Aorta (tissue), 5 donors: ENCODE measurements at regions of chr6 and their contacts with region 1.

Region 1: DNA sequence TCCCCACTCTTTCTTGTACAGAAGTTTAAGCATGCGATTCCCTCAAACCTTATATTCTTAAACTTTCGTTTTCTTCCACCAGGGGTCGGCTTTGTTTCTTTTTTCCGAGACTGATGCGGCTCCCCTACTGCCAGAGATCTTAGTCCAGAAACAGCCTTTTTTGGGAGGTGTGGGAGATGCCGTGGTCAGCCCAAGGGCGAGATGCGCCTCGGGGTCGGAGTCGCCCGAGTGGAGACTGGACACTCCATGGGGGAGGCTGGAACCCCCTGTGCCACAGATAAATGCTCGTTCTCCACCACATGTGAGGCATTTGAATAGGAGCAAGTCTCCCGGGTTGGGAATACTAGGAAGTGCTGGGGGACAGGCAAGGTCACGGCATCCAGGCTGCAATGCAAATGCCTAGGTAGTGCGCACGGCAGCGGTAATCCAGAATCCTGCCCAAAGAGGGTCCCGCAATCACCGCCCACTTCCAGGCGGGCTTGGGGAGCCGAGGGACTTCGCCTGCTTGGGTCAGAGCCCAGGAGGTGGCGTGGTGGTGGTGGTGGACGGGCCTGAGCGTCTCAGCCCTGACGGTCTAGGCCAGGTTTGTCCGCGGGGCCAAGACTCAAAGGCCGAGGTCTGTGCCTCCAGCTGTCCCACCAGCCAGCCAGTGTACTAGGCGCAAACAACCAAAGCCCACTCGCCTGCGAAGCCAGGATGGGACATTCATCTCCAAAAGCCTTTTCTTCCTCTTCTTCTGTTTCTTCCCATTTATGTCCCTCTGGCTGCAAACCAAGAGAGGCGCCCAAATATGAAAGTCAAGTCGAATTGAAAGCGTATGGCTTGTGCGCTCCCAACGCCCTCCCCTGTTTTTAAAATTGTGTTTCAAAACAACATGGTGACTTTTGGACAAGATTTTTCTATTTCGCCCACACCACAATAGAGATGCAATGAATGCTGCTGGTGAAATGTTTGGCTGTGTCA is 39.3 kb upstream of the OSTM1 start:
- DNase-seq: no peak
- ATAC-seq: peak; percentile 46
- H3K4me3 ChIP-seq: peak overlapping the region in 1 of 2 donors; percentile 27
- H3K27ac ChIP-seq: no peak overlapping the region
- H3K4me1 ChIP-seq: no peaks in the 10 kb centered on the region
- H3K27me3 ChIP-seq: no peaks in the 10 kb centered on the region

Region 2: DNA sequence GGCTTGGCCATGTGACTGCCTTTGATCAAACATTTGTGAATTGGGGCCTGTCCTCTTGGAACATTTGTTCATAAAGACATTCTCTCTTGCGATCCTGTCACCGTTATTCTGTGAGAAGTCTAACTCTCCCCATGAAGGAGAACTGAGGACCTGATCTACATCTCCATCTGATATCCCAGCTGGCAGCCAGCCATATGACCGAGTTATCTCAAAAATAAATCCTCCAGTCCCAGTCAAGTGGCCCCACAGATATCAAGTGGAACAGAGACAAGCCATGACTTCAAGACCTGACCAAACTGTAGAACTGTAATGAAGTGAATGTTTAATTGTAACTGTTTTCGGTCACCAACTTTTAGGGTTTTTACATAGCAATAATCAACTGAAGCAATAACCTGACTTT is 121.3 kb after region 1 on chr6:
- intact Hi-C with region 1: no loop called
- DNase-seq: no peak
- ATAC-seq: no peak
- H3K4me3 ChIP-seq: no peak overlapping the region
- H3K27ac ChIP-seq: no peak overlapping the region
- H3K4me1 ChIP-seq: peaks cover 0 to 2% of the 10 kb centered on the region in 2 donors
- H3K27me3 ChIP-seq: no peaks in the 10 kb centered on the region

Region 3: GRCh38 chr6:108294727-108295625 is 181.1 kb after region 1 on chr6 and contains the start of gene AFG1L:
- intact Hi-C with region 1: loop called in 1 of 2 experiments (anchors 5 kb)
- DNase-seq: peak; percentile 96 to 97
- ATAC-seq: peak; percentile 98
- H3K4me3 ChIP-seq: peak within 1 kb of the TSS; percentile 64 to 80
- H3K27ac ChIP-seq: peak within 1 kb of the TSS in 1 of 2 donors; percentile 89
- H3K4me1 ChIP-seq: no peaks in the 10 kb centered on the region
- H3K27me3 ChIP-seq: no peaks in the 10 kb centered on the region
- total RNA-seq, gene AFG1L: 5.1 to 5.7 TPM

Region 4: GRCh38 chr6:108492131-108492766 is 378.4 kb after region 1 on chr6:
- intact Hi-C with region 1: loop called in 1 of 2 experiments (anchors 2 kb)
- DNase-seq: no peak
- ATAC-seq: no peak
- H3K4me3 ChIP-seq: no peak overlapping the region
- H3K27ac ChIP-seq: no peak overlapping the region
- H3K4me1 ChIP-seq: no peaks in the 10 kb centered on the region
- H3K27me3 ChIP-seq: no peaks in the 10 kb centered on the region

Region 5: GRCh38 chr6:108526739-108527174 is 412.9 kb after region 1 on chr6:
- intact Hi-C with region 1: loop called (anchors 2 kb)
- DNase-seq: no peak
- ATAC-seq: peak; percentile 75
- H3K4me3 ChIP-seq: no peak overlapping the region
- H3K27ac ChIP-seq: no peak overlapping the region
- H3K4me1 ChIP-seq: no peaks in the 10 kb centered on the region
- H3K27me3 ChIP-seq: no peaks in the 10 kb centered on the region